GM10248 (cell line): ENCODE measurements at regions of chr19 and their contacts with region 1.

Region 1: GRCh38 chr19:1825909-1826556 is 14.0 kb upstream of the ATP8B3 start:
- DNase-seq: peak; percentile 90
- CTCF ChIP-seq: peak; percentile 96

Region 2: DNA sequence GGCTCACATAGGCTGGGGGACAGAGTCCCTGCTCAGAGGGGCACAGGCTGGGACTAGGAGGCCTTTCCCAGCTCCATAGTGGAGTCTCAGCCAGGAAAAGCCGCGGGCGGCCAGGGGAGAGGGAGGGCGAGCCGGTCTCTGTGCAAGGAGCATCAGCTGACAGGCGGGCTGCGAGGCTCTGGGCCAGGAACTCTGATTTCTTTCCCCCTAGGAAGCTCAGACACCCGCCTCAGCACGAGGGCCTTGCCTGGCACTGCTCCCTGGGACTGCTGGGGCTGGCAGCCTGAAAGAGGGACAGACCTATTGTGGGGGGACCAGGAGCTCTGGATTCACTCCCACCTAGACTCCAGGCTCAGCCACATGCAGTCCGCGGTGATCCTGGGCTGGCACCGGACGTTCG is 304.4 kb before region 1 on chr19:
- CTCF ChIA-PET with region 1: no interaction called
- POLR2A ChIA-PET with region 1: no interaction called
- DNase-seq: no peak
- CTCF ChIP-seq: no peak

Region 3: GRCh38 chr19:1780272-1780958 is 45.6 kb before region 1 on chr19:
- CTCF ChIA-PET with region 1: no interaction called
- POLR2A ChIA-PET with region 1: no interaction called
- DNase-seq: no peak
- CTCF ChIP-seq: no peak

Region 4: DNA sequence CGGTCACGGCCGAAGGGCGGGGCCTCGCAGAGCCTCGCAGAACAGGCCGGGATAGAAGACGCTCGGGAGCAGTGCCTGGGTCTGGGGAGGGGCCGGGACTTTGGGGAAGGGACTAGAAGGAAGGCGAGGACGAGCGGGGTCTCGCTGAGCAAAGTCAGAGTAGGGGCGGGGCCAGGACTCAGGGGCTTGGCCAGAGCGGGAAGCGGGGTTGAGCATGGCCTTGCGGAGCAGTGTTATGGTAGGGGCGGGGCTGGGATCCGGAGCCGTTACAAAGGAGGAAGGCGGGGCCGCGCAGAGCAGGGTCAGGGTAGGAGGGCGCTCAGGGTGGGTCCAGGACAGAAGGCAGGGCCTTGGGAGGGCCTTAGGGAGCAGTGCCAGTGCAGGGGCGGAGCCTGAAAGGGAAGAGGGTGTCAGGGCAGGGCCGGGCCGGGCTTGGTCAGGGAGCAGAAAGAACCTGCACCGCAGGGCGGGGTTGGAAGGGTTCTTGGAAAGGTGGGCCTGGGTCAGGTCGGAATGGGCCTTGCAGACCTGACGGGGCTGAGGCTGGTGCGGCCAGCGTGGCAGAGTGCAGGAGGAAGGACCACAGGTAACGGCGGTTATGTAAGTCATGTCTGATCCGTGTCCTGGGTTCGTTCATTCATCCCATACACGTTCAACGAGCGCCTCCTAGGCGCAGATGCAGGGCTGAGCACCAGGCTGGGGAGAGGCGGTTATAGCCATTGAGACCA is 13.4 kb before region 1 on chr19:
- CTCF ChIA-PET with region 1: interaction called, 51 read pairs
- POLR2A ChIA-PET with region 1: no interaction called
- DNase-seq: peak; percentile 93
- CTCF ChIP-seq: peak; percentile 63

Region 5: GRCh38 chr19:1848399-1849131 is 22.5 kb after region 1 on chr19 and contains the start of gene REXO1:
- CTCF ChIA-PET with region 1: interaction called, 19 read pairs
- POLR2A ChIA-PET with region 1: no interaction called
- DNase-seq: peak; percentile 93
- CTCF ChIP-seq: peak; percentile 87